ENCODE measurements at regions of chr9 and their contacts with region 1.

Region 1: DNA sequence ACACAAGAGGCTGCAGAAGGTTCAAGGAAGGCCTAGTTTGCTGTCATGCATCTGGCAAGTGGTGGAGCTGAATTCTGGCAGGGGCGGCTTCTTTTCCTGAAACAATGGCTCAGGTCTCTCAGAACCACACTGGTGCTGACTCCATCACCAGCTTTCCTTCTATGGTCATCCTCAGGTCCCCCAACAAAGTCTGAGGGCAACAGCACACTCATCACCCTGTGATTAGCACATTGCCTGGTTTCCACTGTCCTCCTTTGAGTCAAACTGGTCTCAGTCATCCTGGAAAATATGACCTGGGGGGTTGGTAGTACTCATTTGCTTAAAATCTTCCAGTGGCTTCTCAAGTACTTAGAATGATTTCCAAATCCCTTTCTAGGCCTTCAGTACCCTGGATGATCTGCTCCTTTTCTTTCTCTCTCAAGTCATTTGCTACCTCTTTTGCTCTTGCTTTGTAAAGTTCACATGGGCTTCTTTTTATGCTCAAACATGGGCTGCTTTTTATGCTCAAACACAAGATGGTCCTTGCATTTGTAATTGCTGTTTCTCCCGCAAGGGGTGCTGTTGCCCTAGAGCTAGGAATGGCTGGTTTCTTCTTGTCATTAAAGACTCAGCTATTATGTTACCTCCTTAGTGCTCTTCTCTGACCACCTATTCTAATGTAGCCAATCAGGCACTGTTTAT is 144.9 kb downstream of the ALDH1A1 start:
- DNase-seq: no peak
- H3K4me3 ChIP-seq: no peak overlapping the region
- H3K27ac ChIP-seq: no peak overlapping the region
- H3K4me1 ChIP-seq: peaks cover 0 to 6% (median 0%) of the 10 kb centered on the region in 4 donors
- H3K27me3 ChIP-seq: no peaks in the 10 kb centered on the region
- CTCF ChIP-seq: no peak
- EP300 ChIP-seq: no peak
- POLR2A ChIP-seq: no peak

Region 2: DNA sequence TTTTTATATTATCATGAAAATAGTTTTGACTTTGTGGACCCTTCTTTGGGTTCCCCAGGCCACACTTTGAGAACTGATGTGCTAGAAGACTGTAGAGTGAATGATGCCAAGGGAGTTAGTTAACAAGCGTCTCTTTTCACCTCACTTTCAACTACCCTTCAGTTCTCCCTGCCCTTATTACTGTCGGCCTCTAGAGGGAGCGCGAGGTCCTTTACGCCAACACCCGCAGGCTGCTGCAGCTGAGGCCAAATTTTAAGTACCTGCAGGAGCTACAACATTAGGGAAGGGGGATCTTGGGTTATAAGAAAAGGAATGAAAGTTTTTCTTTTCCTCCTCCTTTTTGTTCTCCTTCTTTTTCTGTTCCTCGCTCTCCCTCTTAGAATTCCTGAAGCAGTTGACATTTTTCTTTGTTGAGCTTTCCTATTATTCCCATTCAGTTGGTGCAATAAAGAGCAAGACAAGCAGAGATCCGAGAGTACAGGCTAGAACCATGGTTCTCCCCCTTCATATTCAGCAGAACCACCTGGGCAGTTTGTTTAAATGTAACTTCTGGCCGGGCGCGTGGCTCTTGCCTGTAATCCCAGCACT is 526.9 kb before region 1 on chr9:
- in situ Hi-C with region 1: loop called in 1 of 4 experiments (anchors 25 kb)
- intact Hi-C with region 1: no loop called
- DNase-seq: peak; percentile 76
- H3K4me3 ChIP-seq: no peak overlapping the region
- H3K27ac ChIP-seq: no peak overlapping the region
- H3K4me1 ChIP-seq: peaks cover 0 to 9% (median 0%) of the 10 kb centered on the region in 4 donors
- H3K27me3 ChIP-seq: no peaks in the 10 kb centered on the region
- CTCF ChIP-seq: peak; percentile 83 to 93 (median 88)
- EP300 ChIP-seq: no peak
- POLR2A ChIP-seq: no peak

Region 3: GRCh38 chr9:72415163-72415562 is 392.7 kb before region 1 on chr9:
- in situ Hi-C with region 1: no loop called
- intact Hi-C with region 1: no loop called
- DNase-seq: no peak
- H3K4me3 ChIP-seq: no peak overlapping the region
- H3K27ac ChIP-seq: no peak overlapping the region
- H3K4me1 ChIP-seq: no peaks in the 10 kb centered on the region
- H3K27me3 ChIP-seq: no peaks in the 10 kb centered on the region
- CTCF ChIP-seq: no peak
- EP300 ChIP-seq: no peak
- POLR2A ChIP-seq: no peak

Region 4: GRCh38 chr9:72599879-72600534 is 207.9 kb before region 1 on chr9:
- in situ Hi-C with region 1: loop called in 1 of 4 experiments (anchors 25 kb)
- intact Hi-C with region 1: no loop called
- DNase-seq: no peak
- H3K4me3 ChIP-seq: no peak overlapping the region
- H3K27ac ChIP-seq: no peak overlapping the region
- H3K4me1 ChIP-seq: peaks cover 0 to 8% (median 5%) of the 10 kb centered on the region in 4 donors
- H3K27me3 ChIP-seq: no peaks in the 10 kb centered on the region
- CTCF ChIP-seq: no peak
- EP300 ChIP-seq: no peak
- POLR2A ChIP-seq: no peak

Region 5: DNA sequence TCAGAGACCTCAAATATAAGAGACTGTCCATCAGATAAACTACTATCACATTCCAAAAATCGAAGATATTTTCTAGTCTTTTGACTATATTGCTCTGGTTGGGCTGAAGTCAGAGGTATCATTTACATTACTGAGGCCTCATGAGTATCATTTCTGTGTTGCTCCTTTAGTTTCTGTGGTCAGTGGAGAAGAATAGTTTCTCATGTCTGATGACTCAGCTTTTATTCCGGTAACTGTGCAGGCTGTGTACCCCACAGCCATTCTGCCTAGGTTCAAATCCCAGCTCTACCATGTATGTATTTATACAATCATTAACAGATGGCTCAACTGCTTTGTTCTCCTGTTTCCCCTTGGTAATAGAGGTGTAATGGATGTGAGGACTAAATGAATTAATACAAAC is 34.3 kb before region 1 on chr9:
- in situ Hi-C with region 1: no loop called
- intact Hi-C with region 1: no loop called
- DNase-seq: no peak
- H3K4me3 ChIP-seq: no peak overlapping the region
- H3K27ac ChIP-seq: no peak overlapping the region
- H3K4me1 ChIP-seq: no peaks in the 10 kb centered on the region
- H3K27me3 ChIP-seq: no peaks in the 10 kb centered on the region
- CTCF ChIP-seq: no peak
- EP300 ChIP-seq: no peak
- POLR2A ChIP-seq: no peak

Measured in transverse colon (tissue), 4 donors.